PC-9 (cell line): ENCODE measurements at regions of chr14 and their contacts with region 1.

Region 1: GRCh38 chr14:35797796-35798195 is 11.3 kb downstream of the RALGAPA1 start:
- DNase-seq: no peak
- H3K4me3 ChIP-seq: no peak overlapping the region
- H3K27ac ChIP-seq: no peak overlapping the region
- H3K4me1 ChIP-seq: no peaks in the 10 kb centered on the region
- H3K27me3 ChIP-seq: no peaks in the 10 kb centered on the region
- CTCF ChIP-seq: no peak

Region 2: GRCh38 chr14:35695647-35696046 is 102.1 kb before region 1 on chr14:
- CTCF ChIA-PET with region 1: no interaction called
- POLR2A ChIA-PET with region 1: interaction called, 13 read pairs
- intact Hi-C with region 1: no loop called
- DNase-seq: no peak
- H3K4me3 ChIP-seq: no peak overlapping the region
- H3K27ac ChIP-seq: no peak overlapping the region
- H3K4me1 ChIP-seq: no peaks in the 10 kb centered on the region
- H3K27me3 ChIP-seq: no peaks in the 10 kb centered on the region
- CTCF ChIP-seq: no peak

Region 3: GRCh38 chr14:35708073-35708472 is 89.7 kb before region 1 on chr14:
- CTCF ChIA-PET with region 1: no interaction called
- POLR2A ChIA-PET with region 1: no interaction called
- intact Hi-C with region 1: no loop called
- DNase-seq: no peak
- H3K4me3 ChIP-seq: no peak overlapping the region
- H3K27ac ChIP-seq: no peak overlapping the region
- H3K4me1 ChIP-seq: no peaks in the 10 kb centered on the region
- H3K27me3 ChIP-seq: no peaks in the 10 kb centered on the region
- CTCF ChIP-seq: no peak

Region 4: GRCh38 chr14:35844494-35844893 is 46.7 kb after region 1 on chr14:
- CTCF ChIA-PET with region 1: no interaction called
- POLR2A ChIA-PET with region 1: no interaction called
- intact Hi-C with region 1: no loop called
- DNase-seq: no peak
- H3K4me3 ChIP-seq: no peak overlapping the region
- H3K27ac ChIP-seq: no peak overlapping the region
- H3K4me1 ChIP-seq: no peaks in the 10 kb centered on the region
- H3K27me3 ChIP-seq: no peaks in the 10 kb centered on the region
- CTCF ChIP-seq: no peak

Region 5: GRCh38 chr14:35998303-35998702 is 200.5 kb after region 1 on chr14:
- CTCF ChIA-PET with region 1: no interaction called
- POLR2A ChIA-PET with region 1: no interaction called
- intact Hi-C with region 1: no loop called
- DNase-seq: no peak
- H3K4me3 ChIP-seq: no peak overlapping the region
- H3K27ac ChIP-seq: no peak overlapping the region
- H3K4me1 ChIP-seq: no peaks in the 10 kb centered on the region
- H3K27me3 ChIP-seq: no peaks in the 10 kb centered on the region
- CTCF ChIP-seq: no peak

Region 6: DNA sequence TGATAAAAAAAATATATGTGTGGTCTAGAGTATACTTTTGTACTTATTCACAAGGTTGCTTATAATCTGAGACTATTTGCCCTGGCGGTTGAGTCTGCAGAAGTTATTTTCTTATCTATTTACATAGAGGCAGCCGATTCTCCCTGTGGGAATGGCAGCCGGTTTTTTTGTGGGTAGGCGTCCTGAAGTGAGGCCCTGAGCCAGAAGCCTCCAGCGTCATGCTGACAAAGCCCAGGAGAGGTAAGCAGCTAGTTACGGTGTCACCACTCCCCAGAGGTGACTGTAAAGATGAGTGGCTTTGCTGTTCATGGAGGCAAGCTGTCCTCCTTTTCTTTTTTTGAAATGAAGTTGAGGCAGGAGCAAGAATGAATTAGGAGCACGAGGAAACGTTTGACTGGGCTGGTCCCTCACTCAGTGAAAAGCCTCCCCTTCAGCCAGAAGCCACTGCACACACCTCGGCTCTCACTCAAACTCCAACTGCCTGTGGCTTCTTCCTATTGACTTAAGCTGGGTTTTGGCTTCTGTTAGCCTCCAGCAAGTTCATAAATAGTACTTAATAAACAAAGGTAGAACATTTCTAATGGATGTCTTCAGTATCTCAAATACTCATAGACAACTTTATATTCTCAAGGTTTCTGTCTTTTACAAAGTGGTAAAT is 885.4 kb after region 1 on chr14:
- CTCF ChIA-PET with region 1: no interaction called
- POLR2A ChIA-PET with region 1: no interaction called
- intact Hi-C with region 1: no loop called
- DNase-seq: no peak
- H3K4me3 ChIP-seq: no peak overlapping the region
- H3K27ac ChIP-seq: no peak overlapping the region
- H3K4me1 ChIP-seq: no peaks in the 10 kb centered on the region
- H3K27me3 ChIP-seq: no peaks in the 10 kb centered on the region
- CTCF ChIP-seq: no peak